ENCODE measurements at regions of chr22 and their contacts with region 1.

Region 1: DNA sequence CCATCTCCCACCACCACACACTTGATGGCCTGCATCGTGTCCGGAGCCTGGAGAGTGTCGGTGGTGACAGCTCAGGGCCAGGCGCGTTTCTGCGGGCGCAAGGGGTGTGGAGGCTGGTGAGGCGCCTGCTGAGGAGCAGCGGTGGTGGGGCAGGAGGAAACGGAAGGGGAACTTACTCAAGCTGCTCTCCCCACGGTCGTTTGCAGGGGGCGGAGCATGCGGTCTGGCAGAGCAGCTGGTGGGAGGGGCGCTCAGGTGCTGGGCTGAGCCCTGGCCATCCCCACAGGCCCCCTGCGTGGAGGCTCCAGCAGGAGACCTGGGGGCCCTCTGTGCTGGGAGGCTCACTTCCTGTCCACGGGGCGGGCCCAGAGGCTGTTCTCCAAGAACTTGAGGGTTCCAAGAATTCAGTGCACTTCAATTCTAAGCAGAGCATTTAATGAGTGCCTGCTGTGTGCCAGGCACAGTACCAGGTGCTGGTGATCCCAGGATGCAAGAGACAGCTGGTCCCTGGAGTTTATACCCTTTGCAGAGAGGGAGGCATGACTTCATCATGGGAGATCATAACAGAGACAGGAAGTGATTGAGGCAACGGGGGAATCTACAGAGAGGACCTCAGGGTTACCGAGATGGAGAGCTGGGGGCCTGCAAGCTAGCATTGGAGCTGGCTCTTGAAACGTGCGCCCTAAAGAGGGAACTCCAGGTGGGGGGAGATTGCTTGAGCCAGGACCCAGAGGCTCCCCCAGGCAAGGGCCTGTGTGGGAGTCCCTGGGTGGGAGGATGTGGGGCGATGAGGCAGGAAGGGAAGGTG is at the start of gene RAC2:
- DNase-seq: peak; percentile 77
- ATAC-seq: peak; percentile 59
- H3K4me3 Mint-ChIP-seq: peak within 1 kb of the TSS; percentile 97
- H3K27ac Mint-ChIP-seq: peak within 1 kb of the TSS; percentile 90
- H3K4me1 Mint-ChIP-seq: peaks cover 74% of the 10 kb centered on the region
- H3K27me3 Mint-ChIP-seq: no peaks in the 10 kb centered on the region
- CTCF ChIP-seq: no peak
- total RNA-seq, gene RAC2: 518 and 557 TPM in 2 replicates

Region 2: GRCh38 chr22:36123673-36124630 is 1120.4 kb before region 1 on chr22:
- CTCF ChIA-PET with region 1: no interaction called
- POLR2A ChIA-PET with region 1: no interaction called
- intact Hi-C with region 1: no loop called
- DNase-seq: peak; percentile 85
- ATAC-seq: peak; percentile 100
- H3K4me3 Mint-ChIP-seq: peak overlapping the region; percentile 81
- H3K27ac Mint-ChIP-seq: peak overlapping the region; percentile 68
- H3K4me1 Mint-ChIP-seq: peaks cover 8% of the 10 kb centered on the region
- H3K27me3 Mint-ChIP-seq: peaks cover 8% of the 10 kb centered on the region
- CTCF ChIP-seq: peak; percentile 59

Region 3: DNA sequence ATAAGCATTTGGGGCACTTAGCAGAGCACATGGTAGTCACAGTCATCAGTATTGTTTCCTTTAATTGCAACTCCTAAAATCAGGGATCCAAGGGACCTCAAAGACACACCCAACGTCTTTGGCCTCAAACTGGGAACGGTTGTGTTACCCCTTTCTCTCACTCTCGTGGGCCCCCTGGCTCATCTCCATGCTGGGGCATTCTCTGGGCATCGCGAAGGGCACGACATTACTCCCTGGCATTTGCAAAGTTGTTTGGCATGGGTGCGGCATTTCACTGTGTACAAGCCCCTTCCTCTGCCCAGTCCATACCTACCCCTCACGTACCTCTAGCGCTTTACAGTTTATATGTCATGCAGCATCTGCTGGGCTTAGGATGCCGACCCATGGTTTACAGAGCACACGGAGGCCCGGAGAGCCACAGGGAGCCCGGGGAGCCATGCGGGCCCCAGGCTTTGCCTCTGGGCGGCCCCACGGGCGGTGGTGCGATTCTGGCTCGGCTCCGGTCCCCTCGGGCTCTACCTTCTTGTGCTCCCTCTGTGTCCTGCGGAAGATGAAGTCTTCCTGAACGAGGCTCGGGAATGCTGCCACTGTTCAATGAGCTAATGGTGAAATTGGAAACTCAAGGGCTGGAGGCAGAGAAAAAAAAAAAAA is 518.8 kb before region 1 on chr22:
- CTCF ChIA-PET with region 1: no interaction called
- POLR2A ChIA-PET with region 1: no interaction called
- intact Hi-C with region 1: no loop called
- DNase-seq: no peak
- ATAC-seq: no peak
- H3K4me3 Mint-ChIP-seq: no peak overlapping the region
- H3K27ac Mint-ChIP-seq: no peak overlapping the region
- H3K4me1 Mint-ChIP-seq: no peaks in the 10 kb centered on the region
- H3K27me3 Mint-ChIP-seq: peaks cover 37% of the 10 kb centered on the region
- CTCF ChIP-seq: no peak

Region 4: GRCh38 chr22:36775964-36776669 is 468.2 kb before region 1 on chr22 and contains the start of gene IFT27:
- CTCF ChIA-PET with region 1: no interaction called
- POLR2A ChIA-PET with region 1: interaction called, 7 read pairs
- intact Hi-C with region 1: loop called (anchors 1 kb)
- DNase-seq: peak; percentile 81
- ATAC-seq: peak; percentile 89
- H3K4me3 Mint-ChIP-seq: peak within 1 kb of the TSS; percentile 88
- H3K27ac Mint-ChIP-seq: peak within 1 kb of the TSS; percentile 89
- H3K4me1 Mint-ChIP-seq: peaks cover 14% of the 10 kb centered on the region
- H3K27me3 Mint-ChIP-seq: no peaks in the 10 kb centered on the region
- CTCF ChIP-seq: no peak
- total RNA-seq, gene IFT27: 26.2 and 32.7 TPM in 2 replicates

Region 5: GRCh38 chr22:37218771-37219411 is 25.4 kb before region 1 on chr22:
- CTCF ChIA-PET with region 1: interaction called, 8 read pairs
- POLR2A ChIA-PET with region 1: interaction called, 304 read pairs
- intact Hi-C with region 1: loop called (anchors 1 kb)
- DNase-seq: no peak
- ATAC-seq: peak; percentile 83
- H3K4me3 Mint-ChIP-seq: peak overlapping the region; percentile 71
- H3K27ac Mint-ChIP-seq: peak overlapping the region; percentile 99
- H3K4me1 Mint-ChIP-seq: peaks cover 78% of the 10 kb centered on the region
- H3K27me3 Mint-ChIP-seq: no peaks in the 10 kb centered on the region
- CTCF ChIP-seq: no peak

Region 6: GRCh38 chr22:37223965-37224551 is 20.3 kb before region 1 on chr22:
- CTCF ChIA-PET with region 1: interaction called, 56 read pairs
- POLR2A ChIA-PET with region 1: interaction called, 304 read pairs
- intact Hi-C with region 1: loop called (anchors 1 kb)
- DNase-seq: no peak
- ATAC-seq: peak; percentile 64
- H3K4me3 Mint-ChIP-seq: peak overlapping the region; percentile 73
- H3K27ac Mint-ChIP-seq: peak overlapping the region; percentile 99
- H3K4me1 Mint-ChIP-seq: peaks cover 92% of the 10 kb centered on the region
- H3K27me3 Mint-ChIP-seq: no peaks in the 10 kb centered on the region
- CTCF ChIP-seq: no peak

Region 7: GRCh38 chr22:37229805-37230672 is 14.3 kb before region 1 on chr22:
- CTCF ChIA-PET with region 1: interaction called, 56 read pairs
- POLR2A ChIA-PET with region 1: interaction called, 304 read pairs
- intact Hi-C with region 1: loop called (anchors 1 kb)
- DNase-seq: peak; percentile 70
- ATAC-seq: peak; percentile 82
- H3K4me3 Mint-ChIP-seq: peak overlapping the region; percentile 72
- H3K27ac Mint-ChIP-seq: peak overlapping the region; percentile 99
- H3K4me1 Mint-ChIP-seq: peaks cover 91% of the 10 kb centered on the region
- H3K27me3 Mint-ChIP-seq: no peaks in the 10 kb centered on the region
- CTCF ChIP-seq: no peak

Region 8: DNA sequence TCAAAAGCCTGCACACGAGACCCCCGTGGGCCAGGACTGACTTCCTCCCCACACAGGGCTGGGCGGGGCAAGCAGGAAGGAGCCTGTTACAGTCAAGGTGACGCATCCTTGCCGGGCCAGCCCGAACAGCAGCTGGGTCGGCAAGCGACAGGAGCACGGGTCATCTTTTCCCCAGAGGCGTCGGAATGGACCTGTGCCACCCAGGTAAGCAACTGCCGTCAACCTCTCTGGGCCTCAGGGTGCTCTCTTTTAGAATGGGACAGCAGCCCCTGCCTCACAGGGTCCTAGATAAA is 38.0 kb after region 1 on chr22 and contains the start of gene CYTH4:
- CTCF ChIA-PET with region 1: no interaction called
- POLR2A ChIA-PET with region 1: interaction called, 47 read pairs
- intact Hi-C with region 1: loop called (anchors 2 kb)
- DNase-seq: peak; percentile 64
- ATAC-seq: peak; percentile 69
- H3K4me3 Mint-ChIP-seq: peak within 1 kb of the TSS; percentile 86
- H3K27ac Mint-ChIP-seq: peak within 1 kb of the TSS; percentile 99
- H3K4me1 Mint-ChIP-seq: peaks cover 81% of the 10 kb centered on the region
- H3K27me3 Mint-ChIP-seq: no peaks in the 10 kb centered on the region
- CTCF ChIP-seq: no peak
- total RNA-seq, gene CYTH4: 37.2 and 40.3 TPM in 2 replicates

Region 9: DNA sequence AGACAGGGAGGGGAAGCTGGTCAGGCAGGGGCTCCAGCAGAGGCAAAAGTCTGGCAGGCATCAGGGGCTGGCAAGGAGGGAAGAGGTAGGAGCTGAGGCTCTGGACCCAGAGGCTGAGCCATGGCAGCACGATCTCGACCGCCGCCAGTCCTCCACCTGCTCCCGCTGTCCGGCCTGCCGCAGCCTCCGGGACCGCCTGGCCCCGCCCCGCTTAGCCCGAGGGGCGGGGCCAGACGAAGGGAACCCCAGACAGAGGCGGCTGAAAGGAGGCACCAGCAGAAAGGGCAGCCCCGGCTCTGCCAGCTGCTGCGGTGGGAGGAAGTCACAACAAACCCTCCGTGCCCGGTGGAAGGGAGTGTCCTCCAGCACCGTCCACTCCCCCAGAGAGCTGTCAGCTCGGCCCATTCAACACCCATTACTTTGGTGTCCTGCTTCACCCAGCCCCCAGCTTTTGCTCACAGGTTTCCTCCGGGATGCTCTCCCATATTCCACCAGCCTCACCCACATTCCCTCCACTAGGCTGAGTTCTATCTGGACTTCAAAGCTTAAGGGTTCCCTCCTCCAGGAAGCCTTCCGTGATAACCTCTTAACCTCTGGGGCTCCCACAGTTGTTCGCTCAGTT is 242.0 kb after region 1 on chr22 and contains the start of gene MFNG:
- CTCF ChIA-PET with region 1: no interaction called
- POLR2A ChIA-PET with region 1: interaction called, 13 read pairs
- intact Hi-C with region 1: no loop called
- DNase-seq: peak; percentile 73
- ATAC-seq: peak; percentile 79
- H3K4me3 Mint-ChIP-seq: peak within 1 kb of the TSS; percentile 93
- H3K27ac Mint-ChIP-seq: peak within 1 kb of the TSS; percentile 94
- H3K4me1 Mint-ChIP-seq: peaks cover 46% of the 10 kb centered on the region
- H3K27me3 Mint-ChIP-seq: no peaks in the 10 kb centered on the region
- CTCF ChIP-seq: no peak
- total RNA-seq, gene MFNG: 86.1 and 90.6 TPM in 2 replicates

Region 10: DNA sequence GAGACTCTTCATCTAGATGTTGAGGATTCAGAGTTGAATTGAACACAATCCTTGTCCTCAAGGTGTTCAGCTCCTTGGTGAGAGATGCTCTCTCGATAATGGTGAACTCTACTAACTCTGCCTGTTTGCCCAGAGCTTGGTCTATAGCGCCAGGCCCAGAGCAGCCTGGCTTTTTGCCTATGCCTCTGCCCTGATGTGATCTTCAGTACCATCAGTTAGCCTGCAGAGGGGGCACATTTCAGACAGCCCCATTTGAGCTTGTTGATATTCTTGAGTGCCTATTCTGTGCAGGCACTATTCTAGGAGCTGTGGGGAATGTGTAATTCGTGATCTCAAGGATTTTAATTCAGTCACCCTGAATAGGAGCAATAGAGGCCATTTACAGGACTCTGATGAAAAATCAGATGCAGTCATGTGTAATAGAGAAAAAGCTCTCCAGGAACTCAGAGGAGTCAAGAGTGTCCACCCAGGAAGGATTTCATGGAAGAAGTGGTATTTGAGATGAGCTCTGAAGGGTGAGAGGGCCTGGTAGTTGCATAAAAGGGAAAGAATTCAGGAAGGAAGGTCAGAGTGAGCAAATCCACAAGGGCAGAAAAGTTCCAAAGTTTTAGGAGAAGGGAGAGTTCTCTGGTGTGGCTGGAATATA is 1480.7 kb after region 1 on chr22:
- CTCF ChIA-PET with region 1: no interaction called
- POLR2A ChIA-PET with region 1: no interaction called
- intact Hi-C with region 1: no loop called
- DNase-seq: no peak
- ATAC-seq: peak; percentile 88
- H3K4me3 Mint-ChIP-seq: no peak overlapping the region
- H3K27ac Mint-ChIP-seq: no peak overlapping the region
- H3K4me1 Mint-ChIP-seq: no peaks in the 10 kb centered on the region
- H3K27me3 Mint-ChIP-seq: no peaks in the 10 kb centered on the region
- CTCF ChIP-seq: no peak

Measured in activated B cell treated with CpG ODN at 0.5 μM for 24 hours (primary cell).